CD14-positive monocyte (primary cell): ENCODE measurements at regions of chr15 and their contacts with region 1.

Region 1: GRCh38 chr15:65384895-65385858 is 7.4 kb upstream of the IGDCC3 start:
- DNase-seq: peak; percentile 65 to 76 (median 72)
- H3K4me3 ChIP-seq: peak overlapping the region; percentile 33 to 81 (median 49)
- H3K4me3 Mint-ChIP-seq: peak overlapping the region; percentile 85 to 91
- H3K27ac ChIP-seq: no peak overlapping the region
- H3K27ac Mint-ChIP-seq: peak overlapping the region in 2 of 7 donors; percentile 6 to 63
- H3K4me1 ChIP-seq: peaks cover 11 to 16% of the 10 kb centered on the region in 2 donors
- H3K4me1 Mint-ChIP-seq: peaks cover 16% of the 10 kb centered on the region
- H3K27me3 ChIP-seq: peaks cover 4 to 46% of the 10 kb centered on the region in 2 donors
- H3K27me3 Mint-ChIP-seq: peaks cover 36 to 57% (median 40%) of the 10 kb centered on the region in 3 donors
- CTCF ChIP-seq: peak; percentile 70

Region 2: DNA sequence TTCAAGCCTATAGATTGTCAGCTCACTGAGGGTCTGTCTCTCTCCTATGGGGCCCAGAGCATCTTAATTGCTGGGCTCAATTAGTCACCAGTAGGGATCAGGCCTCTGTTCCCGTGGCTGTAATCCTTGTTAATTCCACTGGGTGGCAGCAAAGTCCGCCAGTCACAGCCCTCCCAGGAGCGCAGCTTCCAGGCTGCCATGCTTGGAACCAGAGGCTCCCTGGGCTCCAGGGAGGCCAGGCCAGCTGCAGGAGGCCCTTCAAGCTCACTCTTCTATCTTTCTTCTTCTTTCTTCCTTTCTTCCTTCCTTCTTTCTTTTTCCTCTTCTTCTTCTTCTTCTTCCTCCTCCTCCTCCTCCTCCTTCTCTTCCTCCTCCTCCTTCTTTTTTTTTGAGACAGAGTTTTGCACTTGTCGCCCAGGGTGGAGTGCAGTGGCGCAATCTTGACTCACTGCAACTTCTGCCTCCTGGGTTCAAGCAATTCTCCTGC is 66.3 kb before region 1 on chr15:
- intact Hi-C with region 1: loop called (anchors 2 kb)
- DNase-seq: peak; percentile 70 to 74 (median 71)
- H3K4me3 ChIP-seq: no peak overlapping the region
- H3K4me3 Mint-ChIP-seq: peak overlapping the region; percentile 27 to 67
- H3K27ac ChIP-seq: no peak overlapping the region
- H3K27ac Mint-ChIP-seq: peak overlapping the region in 3 of 7 donors; percentile 31 to 70 (median 54)
- H3K4me1 ChIP-seq: peaks cover 5 to 9% of the 10 kb centered on the region in 2 donors
- H3K4me1 Mint-ChIP-seq: peaks cover 13% of the 10 kb centered on the region
- H3K27me3 ChIP-seq: no peaks in the 10 kb centered on the region
- H3K27me3 Mint-ChIP-seq: peaks cover 12 to 22% (median 18%) of the 10 kb centered on the region in 3 donors
- CTCF ChIP-seq: peak; percentile 92

Region 3: DNA sequence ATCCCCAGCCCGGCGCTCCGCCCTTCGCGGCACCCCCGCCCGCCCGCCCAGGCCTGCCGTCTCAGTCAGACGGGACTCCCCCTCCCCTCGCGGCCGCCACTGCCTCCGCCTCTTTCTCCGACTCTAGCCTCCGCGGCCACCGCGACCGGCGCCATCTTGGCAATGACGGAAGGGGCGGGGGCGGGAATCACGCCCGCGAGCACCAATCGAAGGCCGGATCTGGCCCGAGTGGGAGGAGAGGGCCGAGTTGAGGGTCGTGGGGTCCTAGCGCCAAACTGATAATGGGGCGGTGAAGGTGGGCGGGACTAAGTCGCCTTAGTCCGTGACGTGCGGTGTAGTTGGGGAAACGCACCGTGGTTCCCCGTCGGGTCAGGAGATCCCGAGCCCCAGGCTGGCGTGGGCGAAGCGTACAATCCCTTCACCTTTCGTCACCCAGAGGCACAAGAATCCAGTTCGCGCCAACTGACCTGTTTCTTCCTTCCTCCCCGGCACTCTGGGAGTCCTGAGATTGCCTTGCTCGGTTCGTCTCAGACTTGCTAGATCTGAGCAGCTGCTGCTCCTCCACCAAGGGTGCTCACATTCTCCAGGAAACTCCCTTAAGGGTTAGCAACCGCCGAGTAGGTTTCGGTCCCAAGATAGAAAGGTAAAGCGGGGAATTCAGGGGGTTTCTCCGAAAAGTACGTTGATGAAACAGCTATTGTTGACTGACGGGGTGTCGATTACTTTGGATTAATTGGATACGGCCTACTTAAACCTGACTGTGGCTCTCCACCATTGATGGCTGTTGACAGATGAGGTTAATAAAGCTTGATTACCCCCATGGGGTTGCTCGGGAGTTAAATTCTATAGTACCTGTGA is 407.2 kb after region 1 on chr15 and contains the start of gene DENND4A:
- intact Hi-C with region 1: no loop called
- DNase-seq: peak; percentile 99 to 100 (median 99)
- H3K4me3 ChIP-seq: peak within 1 kb of the TSS; percentile 86 to 92 (median 91)
- H3K4me3 Mint-ChIP-seq: peak within 1 kb of the TSS; percentile 92 to 99
- H3K27ac ChIP-seq: peak within 1 kb of the TSS; percentile 99
- H3K27ac Mint-ChIP-seq: peak within 1 kb of the TSS; percentile 98 to 100 (median 100)
- H3K4me1 ChIP-seq: peaks cover 52 to 53% of the 10 kb centered on the region in 2 donors
- H3K4me1 Mint-ChIP-seq: peaks cover 49% of the 10 kb centered on the region
- H3K27me3 ChIP-seq: no peaks in the 10 kb centered on the region
- H3K27me3 Mint-ChIP-seq: no peaks in the 10 kb centered on the region
- CTCF ChIP-seq: no peak
- polyA plus RNA-seq, gene DENND4A: 4.6 to 11.0 (median 6.9) TPM